ENCODE measurements at regions of chr5 and their contacts with region 1.

Region 1: DNA sequence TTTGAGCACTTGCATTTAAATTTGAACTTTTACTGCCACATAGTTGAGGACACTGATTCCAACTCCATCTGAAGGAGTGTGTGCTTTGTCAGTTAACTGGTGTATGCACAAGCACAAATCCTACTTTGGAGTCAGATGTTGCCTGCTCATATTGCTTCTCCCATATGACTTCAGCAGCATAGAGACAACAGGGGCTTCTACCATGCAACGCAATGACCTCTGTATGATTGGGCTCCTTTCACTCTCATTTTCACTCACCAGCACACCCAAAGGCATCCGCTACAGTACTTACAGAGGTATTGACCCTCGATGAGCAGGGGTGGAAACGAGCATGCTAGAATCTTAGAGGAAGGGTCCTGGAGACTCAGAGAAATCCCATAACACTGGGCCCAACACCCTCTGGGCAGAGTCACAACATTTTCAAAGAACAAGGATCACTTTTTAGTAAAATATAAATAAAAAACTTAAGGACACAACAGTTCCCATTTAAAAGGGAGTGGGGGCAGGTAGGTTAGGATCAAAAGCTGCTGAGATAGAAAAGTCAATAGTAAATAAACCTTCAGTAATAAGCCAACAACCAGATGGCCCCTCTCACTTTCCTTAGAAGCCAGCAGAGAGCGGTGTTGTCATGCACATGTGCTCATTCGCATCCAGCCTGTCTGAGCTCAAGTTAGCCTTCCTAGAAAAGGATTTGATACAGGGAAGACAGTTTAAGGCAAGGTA is 203.8 kb downstream of the SNCAIP start:
- DNase-seq: peak in 1 of 2 donors; percentile 40
- ATAC-seq: peak; percentile 99

Region 2: GRCh38 chr5:122354293-122354692 is 161.6 kb before region 1 on chr5:
- intact Hi-C with region 1: no loop called
- DNase-seq: no peak
- ATAC-seq: no peak

Region 3: GRCh38 chr5:122442938-122443337 is 72.9 kb before region 1 on chr5:
- intact Hi-C with region 1: no loop called
- DNase-seq: no peak
- ATAC-seq: no peak

Region 4: DNA sequence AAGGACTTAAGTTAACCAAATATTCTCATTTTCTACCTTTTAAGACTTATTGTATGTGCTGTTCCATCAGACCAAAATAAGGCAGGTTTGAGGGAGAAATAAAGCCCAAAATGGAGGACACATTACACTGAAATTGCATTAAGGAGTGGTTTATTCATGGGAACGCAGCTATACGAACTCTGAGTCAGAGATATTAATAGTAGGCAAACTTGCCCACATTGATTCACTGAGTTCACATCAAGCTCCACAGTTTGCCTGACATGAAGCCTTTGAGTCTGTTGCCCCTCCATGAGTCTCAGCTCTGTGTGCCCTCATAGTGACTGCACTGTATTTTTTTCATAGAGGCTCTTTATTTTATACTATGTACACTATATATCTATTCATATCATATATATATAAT is 124.0 kb after region 1 on chr5:
- intact Hi-C with region 1: no loop called
- DNase-seq: no peak
- ATAC-seq: no peak

Region 5: GRCh38 chr5:122835681-122836080 is 319.8 kb after region 1 on chr5:
- intact Hi-C with region 1: no loop called
- DNase-seq: no peak
- ATAC-seq: no peak

Region 6: DNA sequence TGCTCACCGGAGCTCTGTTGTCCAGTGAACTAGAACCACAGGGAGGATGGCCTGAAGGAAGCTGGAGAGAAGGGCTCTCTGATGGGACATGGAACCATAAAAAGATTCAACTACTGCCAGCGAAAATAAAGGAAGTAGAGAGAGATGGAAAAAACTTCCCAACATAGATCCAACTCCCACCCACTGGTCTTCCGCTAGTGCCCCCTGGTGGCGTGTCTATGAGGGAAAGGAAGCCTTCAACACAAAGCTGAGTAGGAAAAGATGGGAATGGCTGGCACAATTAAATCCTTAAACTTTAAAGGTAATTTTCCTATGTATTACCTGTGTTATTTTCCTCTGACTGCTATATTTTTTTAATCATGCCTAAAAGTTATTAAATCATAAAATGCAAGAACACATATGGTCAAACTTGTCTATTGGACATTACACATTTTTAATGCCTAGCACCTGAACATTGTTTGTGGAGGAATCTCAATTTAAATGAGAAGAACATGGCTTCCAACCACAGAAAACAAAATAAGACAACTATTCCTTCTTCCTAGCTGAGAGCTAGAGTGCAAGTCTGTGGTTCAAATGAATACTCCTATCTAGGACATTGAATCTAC is 855.8 kb after region 1 on chr5:
- intact Hi-C with region 1: loop called in 1 of 2 experiments (anchors 5 kb)
- DNase-seq: peak in 1 of 2 donors; percentile 75
- ATAC-seq: peak; percentile 42

Region 7: DNA sequence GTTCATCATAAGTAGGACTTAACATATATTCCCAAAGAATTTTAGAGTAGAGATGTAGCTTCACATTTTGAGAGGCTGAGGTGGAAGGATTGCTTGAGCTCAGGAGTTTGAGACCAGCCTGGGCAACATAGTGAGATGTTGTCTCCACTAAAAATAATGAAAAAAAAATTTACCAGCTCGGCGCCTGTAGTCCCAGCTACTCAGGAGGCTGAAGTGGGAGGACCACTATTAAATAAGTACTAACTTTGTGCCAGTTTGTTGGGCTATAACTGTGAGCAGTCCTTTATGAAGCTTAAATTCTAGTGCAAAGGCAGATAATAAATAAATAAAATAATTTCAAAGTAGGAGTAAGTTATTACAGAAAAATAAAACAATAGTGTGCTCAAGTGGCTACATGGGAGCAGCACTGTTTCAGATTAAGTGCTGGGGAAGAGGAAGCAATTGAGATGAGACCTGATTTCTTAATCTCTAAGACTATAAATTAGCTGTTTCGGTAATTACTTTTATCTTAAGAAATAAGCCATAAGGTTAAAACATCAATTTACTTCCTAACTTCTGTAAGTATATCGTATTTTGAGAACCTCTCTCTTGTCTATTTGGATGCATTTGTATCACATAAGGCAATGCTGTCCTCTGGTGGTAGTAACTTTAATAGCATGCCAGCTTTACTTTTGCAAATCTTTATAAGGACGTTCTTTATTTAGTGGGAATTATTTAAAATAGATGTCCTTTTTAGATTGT is 1095.0 kb after region 1 on chr5:
- intact Hi-C with region 1: loop called in 1 of 2 experiments (anchors 10 kb)
- DNase-seq: no peak
- ATAC-seq: peak; percentile 75

Measured in left colon (tissue), 2 donors.